Activated CD8-positive, alpha-beta T cell treated with anti-CD3 and anti-CD28 coated beads for 36 hours (primary cell): ENCODE measurements at regions of chr11 and their contacts with region 1.

Region 1: DNA sequence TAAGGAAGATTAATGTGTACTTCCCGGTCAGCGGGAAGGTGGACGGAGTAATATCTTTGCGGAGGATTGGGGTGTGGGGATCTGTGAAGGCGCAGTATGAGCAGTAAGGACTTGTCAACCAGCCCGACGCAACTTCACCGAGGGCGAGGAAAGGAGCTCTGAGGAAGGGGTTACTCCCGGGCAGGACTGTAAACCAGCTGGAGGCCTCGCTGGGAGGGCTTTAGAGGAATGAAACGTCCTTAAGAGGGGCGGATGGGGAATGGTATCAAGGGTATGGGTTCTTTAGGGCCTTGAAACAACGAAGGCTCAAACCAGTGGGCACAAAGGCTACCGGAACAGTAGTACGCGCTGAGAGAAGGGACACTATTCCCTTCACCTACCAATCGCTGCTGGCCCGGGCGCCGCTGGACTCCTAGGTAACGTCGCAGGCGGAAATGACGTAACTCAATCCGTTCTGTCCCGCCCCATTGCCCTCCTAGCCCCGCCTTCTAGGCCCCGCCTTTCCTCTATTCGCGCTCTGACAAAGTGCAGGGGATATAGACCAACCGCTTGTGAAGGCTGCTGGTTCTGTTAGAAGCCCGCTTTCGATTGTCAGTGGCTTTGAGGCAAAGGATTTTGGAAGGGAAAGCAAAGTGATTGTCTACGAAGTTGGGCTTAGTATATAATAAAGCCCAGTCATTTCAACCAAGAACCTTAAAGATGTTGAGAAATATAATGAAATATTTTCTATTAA is at the start of gene C11orf65:
- DNase-seq: peak; percentile 98
- ATAC-seq: peak; percentile 99
- H3K4me3 Mint-ChIP-seq: peak within 1 kb of the TSS; percentile 92
- H3K27ac Mint-ChIP-seq: peak within 1 kb of the TSS; percentile 98
- H3K4me1 Mint-ChIP-seq: no peaks in the 10 kb centered on the region
- H3K27me3 Mint-ChIP-seq: no peaks in the 10 kb centered on the region
- CTCF ChIP-seq: no peak
- total RNA-seq, gene C11orf65: 1.1 to 2.3 TPM

Region 2: DNA sequence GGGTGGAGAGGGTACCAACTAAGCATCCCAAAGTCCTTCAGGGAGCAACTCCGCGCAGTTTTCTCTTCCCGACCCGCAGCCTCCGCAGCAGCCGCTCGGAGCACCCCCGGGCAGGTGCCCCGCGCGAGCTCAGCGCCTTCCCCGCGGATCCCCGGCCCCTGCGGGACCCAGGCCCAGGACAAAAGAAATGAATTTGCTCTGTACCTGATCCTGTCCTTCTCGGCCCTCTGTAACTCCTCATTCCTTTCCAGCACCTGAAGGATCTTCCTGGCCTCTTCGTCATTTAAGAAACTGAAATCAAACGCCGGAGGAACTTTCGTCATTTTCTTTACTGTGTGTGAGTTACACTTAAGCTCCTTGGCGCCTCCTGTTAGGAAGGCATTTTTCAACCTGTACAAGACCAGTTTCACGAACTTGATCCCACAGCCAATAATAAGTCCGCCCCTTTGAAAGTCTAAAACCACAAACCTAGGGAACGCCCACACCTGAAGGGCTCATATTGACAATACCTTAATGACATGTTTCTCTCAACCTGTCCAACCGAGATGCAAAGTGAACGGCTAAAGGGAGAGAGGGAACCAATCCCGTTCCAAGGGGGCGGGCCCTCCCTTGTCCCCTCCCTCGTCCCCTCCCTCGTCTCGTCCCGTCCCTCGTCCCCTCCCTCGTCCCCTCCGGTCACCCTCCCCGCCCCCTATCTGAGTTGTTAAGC is 126.1 kb after region 1 on chr11 and contains the start of gene EXPH5:
- CTCF ChIA-PET with region 1: no interaction called
- POLR2A ChIA-PET with region 1: no interaction called
- intact Hi-C with region 1: loop called (anchors 2 kb)
- DNase-seq: peak; percentile 94
- ATAC-seq: peak; percentile 99
- H3K4me3 Mint-ChIP-seq: peak within 1 kb of the TSS; percentile 90
- H3K27ac Mint-ChIP-seq: peak within 1 kb of the TSS; percentile 82
- H3K4me1 Mint-ChIP-seq: peaks cover 17% of the 10 kb centered on the region
- H3K27me3 Mint-ChIP-seq: peaks cover 18% of the 10 kb centered on the region
- CTCF ChIP-seq: no peak
- total RNA-seq, gene EXPH5: 2.9 to 4.1 TPM

Region 3: GRCh38 chr11:108635071-108635470 is 167.8 kb after region 1 on chr11:
- CTCF ChIA-PET with region 1: no interaction called
- POLR2A ChIA-PET with region 1: no interaction called
- intact Hi-C with region 1: no loop called
- DNase-seq: no peak
- ATAC-seq: no peak
- H3K4me3 Mint-ChIP-seq: no peak overlapping the region
- H3K27ac Mint-ChIP-seq: no peak overlapping the region
- H3K4me1 Mint-ChIP-seq: no peaks in the 10 kb centered on the region
- H3K27me3 Mint-ChIP-seq: peaks cover 18% of the 10 kb centered on the region
- CTCF ChIP-seq: no peak